ENCODE measurements at regions of chr9 and their contacts with region 1.

Region 1: GRCh38 chr9:34252670-34253459 is 74.0 kb downstream of the UBAP1 start:
- DNase-seq: no peak
- ATAC-seq: peak; percentile 30

Region 2: GRCh38 chr9:32665101-32665500 is 1587.8 kb before region 1 on chr9:
- intact Hi-C with region 1: no loop called
- DNase-seq: no peak
- ATAC-seq: no peak

Region 3: DNA sequence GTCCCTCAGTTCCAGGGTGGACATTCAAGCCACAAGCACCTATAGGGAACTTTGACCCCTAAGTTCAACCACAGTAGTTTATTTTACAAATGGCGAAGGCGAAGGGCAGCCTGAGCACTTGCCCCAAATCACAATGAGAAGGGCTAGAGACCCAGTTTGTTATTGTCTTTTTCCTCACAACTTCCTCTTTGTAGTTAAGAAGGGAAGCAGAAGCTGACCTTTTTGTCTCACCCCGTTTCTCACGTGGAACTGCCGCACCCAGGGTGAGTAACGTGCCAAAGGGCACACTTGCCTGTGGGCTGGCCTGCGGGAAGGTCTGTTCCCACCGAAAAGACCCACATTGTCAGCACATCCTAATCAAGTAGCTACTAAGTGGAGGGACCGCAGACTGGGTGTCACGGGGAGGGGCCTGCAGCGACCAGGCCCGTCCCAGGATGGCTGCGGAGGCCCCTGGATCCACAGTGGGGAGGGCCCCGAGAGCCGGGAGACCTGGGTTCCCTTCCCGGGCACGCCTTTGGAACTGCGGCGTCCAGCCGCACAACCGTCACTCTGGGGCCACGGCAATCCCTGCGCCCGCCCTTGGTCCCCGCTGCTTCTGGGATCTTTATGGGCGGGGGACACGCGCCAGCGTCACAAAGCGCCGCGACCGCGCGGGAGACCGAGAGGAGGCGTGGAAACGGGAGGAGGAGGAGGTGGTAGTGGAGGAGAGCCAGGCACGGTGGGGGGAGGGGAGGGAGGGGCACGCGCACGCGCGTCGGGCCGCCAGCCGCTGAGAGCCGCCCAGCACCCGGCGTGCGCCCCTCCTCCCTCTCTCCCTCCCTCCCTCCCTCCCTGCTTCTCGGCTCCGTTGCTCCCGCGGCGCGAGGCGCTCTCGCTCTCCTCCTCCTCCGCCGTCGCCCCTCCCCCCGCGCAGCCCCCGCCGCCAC is 436.3 kb before region 1 on chr9 and contains the start of gene UBE2R2:
- intact Hi-C with region 1: loop called (anchors 5 kb)
- DNase-seq: peak; percentile 97
- ATAC-seq: peak; percentile 90
- total RNA-seq, gene UBE2R2: 44.0 TPM

Region 4: DNA sequence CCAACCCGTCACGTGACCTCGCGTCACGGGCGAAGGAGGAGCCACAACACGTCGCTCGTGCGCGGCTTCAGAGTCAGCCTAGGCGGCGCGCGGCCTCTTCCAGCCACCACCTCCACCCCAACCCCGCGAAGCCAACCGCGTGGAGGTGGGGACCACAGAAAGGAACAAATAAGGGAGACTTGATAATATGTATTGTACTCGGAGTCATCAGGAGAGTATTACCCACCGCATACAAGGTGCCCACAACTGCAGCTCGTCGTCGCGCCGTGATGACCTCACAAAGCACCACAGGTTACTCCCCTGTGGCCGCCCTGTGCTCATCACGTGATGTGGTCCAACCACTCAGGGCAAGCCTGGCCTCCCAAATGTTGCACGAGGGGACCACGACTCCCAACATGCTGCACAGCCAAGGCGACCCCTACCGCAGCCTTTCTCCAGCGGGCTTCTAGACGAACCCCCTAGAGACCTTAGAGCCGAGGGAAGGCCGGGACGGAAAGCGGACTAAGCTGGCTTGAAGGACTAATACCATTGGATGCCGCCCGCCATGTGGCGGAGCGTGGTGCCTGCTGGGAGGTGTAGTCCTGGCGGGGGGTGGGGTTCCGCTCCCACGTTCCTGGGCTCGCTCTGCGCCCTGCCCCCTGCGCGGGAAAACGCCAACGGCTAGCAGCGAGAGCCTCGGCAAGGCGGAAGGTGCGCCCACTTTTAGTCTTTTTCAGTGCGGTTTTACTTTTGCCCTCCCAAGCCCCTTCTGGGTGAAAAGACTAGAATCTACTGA is 203.8 kb before region 1 on chr9:
- intact Hi-C with region 1: loop called (anchors 1 kb)
- DNase-seq: peak; percentile 99
- ATAC-seq: peak; percentile 95

Region 5: GRCh38 chr9:34126207-34127034 is 126.4 kb before region 1 on chr9 and contains the start of gene DCAF12:
- intact Hi-C with region 1: loop called (anchors 5 kb)
- DNase-seq: peak; percentile 95
- ATAC-seq: peak; percentile 97
- total RNA-seq, gene DCAF12: 17.6 TPM

Region 6: DNA sequence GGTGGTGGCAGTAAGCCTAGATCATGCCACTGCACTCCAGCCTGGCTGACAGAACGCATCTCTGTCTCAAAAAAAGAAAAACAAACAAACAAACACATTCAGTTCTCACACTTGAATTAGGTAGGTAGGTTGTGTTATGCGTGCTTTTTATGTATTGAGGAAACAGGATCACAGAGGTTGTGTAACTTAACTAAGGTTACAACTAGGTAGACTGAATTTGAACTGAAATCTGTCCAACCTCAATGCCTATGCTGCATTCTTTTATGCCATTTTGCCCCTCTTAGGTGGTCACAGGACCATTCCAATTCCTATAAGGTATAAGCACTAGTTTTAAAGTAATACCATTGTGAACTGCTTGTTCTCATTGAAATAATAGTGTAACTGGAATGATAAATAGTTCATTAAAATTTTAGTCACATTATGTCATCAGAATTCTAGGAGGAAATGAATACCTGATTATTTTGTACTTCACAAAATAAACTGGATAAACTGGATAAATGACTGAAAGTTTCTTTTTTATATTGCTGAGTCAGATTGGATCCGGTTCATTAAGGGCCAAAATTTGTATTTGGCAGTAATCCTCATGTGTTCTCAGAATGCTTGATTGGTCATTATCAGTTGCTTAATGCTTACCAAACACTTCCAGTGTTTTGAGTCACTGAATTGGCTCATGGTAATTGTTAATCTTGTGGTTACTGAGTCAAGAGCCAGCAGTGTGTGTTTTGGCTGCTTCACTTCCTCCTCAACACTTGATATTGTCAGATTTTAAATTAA is 66.9 kb before region 1 on chr9:
- intact Hi-C with region 1: loop called (anchors 2 kb)
- DNase-seq: no peak
- ATAC-seq: peak; percentile 92